ENCODE measurements at regions of chr1 and their contacts with region 1.

Region 1: DNA sequence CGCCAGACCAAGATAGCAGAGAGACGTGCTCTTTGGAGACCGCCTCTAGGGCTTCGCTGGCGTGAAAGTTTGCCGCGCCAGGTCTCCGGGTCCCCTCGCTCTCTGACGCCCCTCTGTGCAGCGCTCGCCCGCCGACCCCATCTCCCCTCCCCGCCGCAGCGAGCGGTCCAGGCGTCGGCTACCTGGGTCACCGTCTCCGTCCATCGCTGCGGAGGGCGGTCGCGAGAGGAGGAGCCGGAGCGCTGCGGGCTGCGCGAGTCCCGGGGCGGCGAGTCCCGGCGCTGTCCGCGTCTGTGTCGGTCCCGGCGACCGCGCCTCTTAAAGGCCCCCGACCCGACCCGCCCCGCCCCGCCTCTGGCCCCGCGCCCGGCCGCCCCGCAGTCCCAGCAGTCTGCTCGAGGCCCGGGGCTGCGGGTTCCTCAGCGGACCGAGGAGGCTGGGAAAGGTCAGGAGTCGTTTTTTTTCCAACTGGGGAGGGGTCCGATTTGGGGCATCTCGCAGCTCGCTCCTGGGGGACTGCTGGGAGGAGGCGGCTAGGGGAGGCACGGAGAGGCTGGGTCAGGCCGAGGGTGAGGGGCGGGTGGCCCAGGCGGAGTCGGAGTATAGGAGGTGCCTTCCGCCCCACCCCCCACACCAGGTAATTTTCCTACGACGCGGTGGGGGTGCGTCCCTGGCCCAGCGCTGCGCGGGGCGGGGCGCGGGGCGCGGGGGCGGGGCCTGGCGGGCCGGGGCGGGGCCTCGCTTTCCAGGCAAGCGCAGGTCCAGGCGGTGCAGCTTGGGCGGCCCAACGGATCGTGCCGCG is at the starts of genes FBXO2 and FBXO44:
- DNase-seq: peak; percentile 60
- H3K4me3 Mint-ChIP-seq: peak within 1 kb of the TSS; percentile 71
- H3K27ac Mint-ChIP-seq: no peak within 1 kb of the TSS
- H3K4me1 Mint-ChIP-seq: peaks cover 29% of the 10 kb centered on the region
- H3K27me3 Mint-ChIP-seq: peaks cover 6% of the 10 kb centered on the region
- total RNA-seq, gene FBXO2: 1.4 to 1.8 TPM
- total RNA-seq, gene FBXO44: 30.4 to 32.4 TPM

Region 2: GRCh38 chr1:11634365-11635192 is 19.8 kb before region 1 on chr1:
- CTCF ChIA-PET with region 1: no interaction called
- POLR2A ChIA-PET with region 1: no interaction called
- DNase-seq: no peak
- H3K4me3 Mint-ChIP-seq: no peak overlapping the region
- H3K27ac Mint-ChIP-seq: no peak overlapping the region
- H3K4me1 Mint-ChIP-seq: no peaks in the 10 kb centered on the region
- H3K27me3 Mint-ChIP-seq: peaks cover 15% of the 10 kb centered on the region

Region 3: GRCh38 chr1:11670747-11671146 is 16.4 kb after region 1 on chr1:
- CTCF ChIA-PET with region 1: interaction called, 5 read pairs
- POLR2A ChIA-PET with region 1: interaction called, 52 read pairs
- DNase-seq: no peak
- H3K4me3 Mint-ChIP-seq: no peak overlapping the region
- H3K27ac Mint-ChIP-seq: no peak overlapping the region
- H3K4me1 Mint-ChIP-seq: peaks cover 18% of the 10 kb centered on the region
- H3K27me3 Mint-ChIP-seq: no peaks in the 10 kb centered on the region